ENCODE measurements at regions of chr2 and their contacts with region 1.

Region 1: DNA sequence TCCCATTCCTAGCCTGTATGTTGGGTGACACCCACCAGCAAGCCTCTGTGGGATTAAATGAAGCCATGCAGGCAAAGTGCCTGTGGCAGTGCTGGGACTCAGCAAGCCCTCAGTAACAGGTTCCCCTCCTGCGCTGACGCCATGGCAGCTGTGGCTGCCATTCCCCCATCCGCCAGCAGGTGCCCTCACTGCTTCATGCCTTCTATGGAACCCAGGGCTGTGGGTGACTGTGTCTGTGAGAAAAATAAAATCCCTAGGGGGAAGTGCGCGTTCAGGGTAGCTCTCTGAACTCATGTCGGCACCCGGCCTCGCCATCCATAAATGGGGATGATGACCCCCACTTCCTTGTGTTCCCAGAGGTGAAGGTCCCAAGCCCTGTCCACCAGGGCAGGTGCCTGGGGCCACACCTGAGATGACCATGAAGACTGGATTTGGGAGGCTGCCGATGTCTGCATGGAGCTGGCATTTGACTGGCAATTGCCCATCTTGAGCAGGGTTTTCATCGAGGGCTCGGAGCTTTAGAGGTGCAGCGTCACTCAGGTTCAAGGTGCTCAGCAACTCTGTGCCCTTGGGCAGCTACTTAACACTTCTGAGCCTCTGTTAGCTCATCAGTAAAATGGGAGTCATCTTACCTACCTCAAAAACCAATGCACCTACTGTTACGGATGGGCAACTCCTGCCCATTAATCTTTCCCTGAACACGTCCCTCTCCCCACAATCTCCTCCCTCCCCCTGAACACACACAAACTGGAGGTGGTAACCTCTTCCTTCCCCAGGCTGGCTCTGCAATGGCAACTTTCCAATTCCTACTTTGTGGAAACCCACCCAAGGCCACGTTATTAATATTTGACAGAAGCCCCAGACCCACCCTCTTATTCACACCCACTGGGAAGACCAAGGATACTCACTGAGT is 2.9 kb upstream of the MAL start:
- DNase-seq: peak; percentile 21
- H3K4me3 ChIP-seq: no peak overlapping the region
- H3K27ac ChIP-seq: no peak overlapping the region
- H3K27me3 ChIP-seq: peaks cover 51% of the 10 kb centered on the region
- CTCF ChIP-seq: peak; percentile 98

Region 2: DNA sequence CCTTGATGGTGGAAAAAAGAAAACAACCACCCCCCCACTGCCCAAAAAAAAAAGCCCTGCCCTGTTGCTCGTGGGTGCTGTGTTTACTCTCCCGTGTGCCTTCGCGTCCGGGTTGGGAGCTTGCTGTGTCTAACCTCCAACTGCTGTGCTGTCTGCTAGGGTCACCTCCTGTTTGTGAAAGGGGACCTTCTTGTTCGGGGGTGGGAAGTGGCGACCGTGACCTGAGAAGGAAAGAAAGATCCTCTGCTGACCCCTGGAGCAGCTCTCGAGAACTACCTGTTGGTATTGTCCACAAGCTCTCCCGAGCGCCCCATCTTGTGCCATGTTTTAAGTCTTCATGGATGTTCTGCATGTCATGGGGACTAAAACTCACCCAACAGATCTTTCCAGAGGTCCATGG is 31.0 kb after region 1 on chr2:
- CTCF ChIA-PET with region 1: interaction called, 14 read pairs
- POLR2A ChIA-PET with region 1: no interaction called
- DNase-seq: no peak
- H3K4me3 ChIP-seq: no peak overlapping the region
- H3K27ac ChIP-seq: no peak overlapping the region
- H3K27me3 ChIP-seq: peaks cover 22% of the 10 kb centered on the region
- CTCF ChIP-seq: no peak

Region 3: GRCh38 chr2:95068256-95068655 is 45.7 kb after region 1 on chr2:
- CTCF ChIA-PET with region 1: interaction called, 10 read pairs
- POLR2A ChIA-PET with region 1: no interaction called
- DNase-seq: no peak
- H3K4me3 ChIP-seq: no peak overlapping the region
- H3K27ac ChIP-seq: no peak overlapping the region
- H3K27me3 ChIP-seq: peaks cover 11% of the 10 kb centered on the region
- CTCF ChIP-seq: no peak

Region 4: DNA sequence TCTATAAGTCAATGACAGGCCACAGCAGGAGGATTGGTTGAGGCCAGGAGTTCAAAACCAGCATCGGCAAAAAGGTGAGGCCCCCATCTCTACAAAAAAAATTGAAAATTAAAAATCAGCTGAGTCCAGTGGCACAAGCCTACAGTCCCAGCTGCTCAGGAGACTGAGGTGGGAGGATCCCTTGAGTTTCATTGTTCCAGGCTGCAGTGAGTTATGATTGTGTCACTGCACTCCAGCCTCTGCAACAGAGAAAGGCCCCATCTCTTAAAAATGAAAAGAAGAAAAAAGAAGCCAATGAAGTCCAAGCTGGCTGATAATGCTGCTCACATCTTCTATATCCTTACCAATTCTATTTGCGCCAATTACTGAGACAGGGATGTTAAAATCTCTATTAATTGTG is 59.9 kb after region 1 on chr2:
- CTCF ChIA-PET with region 1: interaction called, 72 read pairs
- POLR2A ChIA-PET with region 1: no interaction called
- DNase-seq: no peak
- H3K4me3 ChIP-seq: no peak overlapping the region
- H3K27ac ChIP-seq: no peak overlapping the region
- H3K27me3 ChIP-seq: peaks cover 9% of the 10 kb centered on the region
- CTCF ChIP-seq: no peak

Region 5: GRCh38 chr2:95115418-95115817 is 92.9 kb after region 1 on chr2:
- CTCF ChIA-PET with region 1: interaction called, 75 read pairs
- POLR2A ChIA-PET with region 1: no interaction called
- DNase-seq: peak; percentile 21
- H3K4me3 ChIP-seq: no peak overlapping the region
- H3K27ac ChIP-seq: no peak overlapping the region
- H3K27me3 ChIP-seq: no peaks in the 10 kb centered on the region
- CTCF ChIP-seq: peak; percentile 89